ENCODE measurements at regions of chr14 and their contacts with region 1.

Region 1: DNA sequence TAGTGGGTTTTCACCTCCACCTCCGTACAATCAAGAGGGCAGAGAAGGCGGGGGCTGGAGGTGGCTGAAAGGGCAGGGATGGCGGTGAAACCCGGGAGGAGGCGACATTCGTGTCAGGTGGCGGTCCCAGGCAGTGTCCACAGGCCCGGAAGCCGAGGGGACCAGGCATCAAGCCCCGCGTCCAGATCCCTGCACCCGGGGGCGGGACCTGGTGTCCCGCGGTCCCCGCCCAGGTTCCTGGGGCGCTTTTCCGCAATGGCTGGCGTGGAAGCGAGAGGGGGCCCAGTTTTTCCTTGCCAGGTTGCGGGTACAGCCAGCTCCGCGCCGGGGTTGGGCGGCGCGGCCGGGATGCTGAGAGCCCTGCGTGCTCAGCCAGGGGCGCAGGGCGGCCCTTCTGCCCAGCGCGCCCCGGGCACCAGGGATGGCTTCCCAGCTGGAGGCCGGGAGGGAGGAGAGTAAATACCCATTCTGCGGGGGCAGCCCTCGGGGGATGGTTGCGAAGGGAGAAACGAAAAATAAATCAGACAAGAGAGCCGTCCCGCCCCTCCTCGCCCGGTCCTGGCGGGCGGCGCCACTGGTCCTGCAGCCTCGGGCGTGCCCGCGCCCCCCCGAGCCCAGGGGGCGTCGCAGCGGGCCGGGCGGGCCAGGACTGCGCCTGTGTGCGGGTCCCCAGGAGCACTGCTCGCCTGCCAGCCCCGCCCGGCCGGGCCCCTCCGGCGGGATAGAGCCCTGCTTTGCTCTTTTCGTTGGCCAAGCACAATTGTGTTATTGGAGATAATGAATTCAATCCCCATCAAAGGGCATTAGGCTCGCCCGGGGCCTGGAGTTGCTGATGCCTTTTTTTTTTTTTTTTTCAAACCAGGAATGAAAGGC is 11.5 kb downstream of the FOXA1 start:
- DNase-seq: peak; percentile 85
- ATAC-seq: peak; percentile 26
- H3K4me3 ChIP-seq: peak overlapping the region; percentile 96
- H3K27ac ChIP-seq: peak overlapping the region; percentile 99
- H3K4me1 ChIP-seq: peaks cover 86% of the 10 kb centered on the region
- H3K27me3 ChIP-seq: no peaks in the 10 kb centered on the region
- CTCF ChIP-seq: no peak; the same call in 1 of the 2 replicates

Region 2: GRCh38 chr14:37172024-37172869 is 411.3 kb before region 1 on chr14 and contains the start of gene SLC25A21:
- CTCF ChIA-PET with region 1: no interaction called
- POLR2A ChIA-PET with region 1: no interaction called
- intact Hi-C with region 1: loop called (anchors 10 kb)
- DNase-seq: peak; percentile 87
- ATAC-seq: peak; percentile 94
- H3K4me3 ChIP-seq: peak within 1 kb of the TSS; percentile 82
- H3K27ac ChIP-seq: peak within 1 kb of the TSS; percentile 87
- H3K4me1 ChIP-seq: peaks cover 15% of the 10 kb centered on the region
- H3K27me3 ChIP-seq: no peaks in the 10 kb centered on the region
- CTCF ChIP-seq: 0 out of 2 replicates have a peak, but pooled peaks have one; percentile 29
- total RNA-seq, gene SLC25A21: 0.87 and 1.0 TPM in 2 replicates

Region 3: GRCh38 chr14:37329189-37330001 is 254.2 kb before region 1 on chr14:
- CTCF ChIA-PET with region 1: no interaction called
- POLR2A ChIA-PET with region 1: interaction called, 3 read pairs
- intact Hi-C with region 1: loop called (anchors 2 kb)
- DNase-seq: peak; percentile 64
- ATAC-seq: peak; percentile 80
- H3K4me3 ChIP-seq: no peak overlapping the region
- H3K27ac ChIP-seq: peak overlapping the region; percentile 58
- H3K4me1 ChIP-seq: peaks cover 18% of the 10 kb centered on the region
- H3K27me3 ChIP-seq: no peaks in the 10 kb centered on the region
- CTCF ChIP-seq: no peak

Region 4: GRCh38 chr14:37436494-37436893 is 147.1 kb before region 1 on chr14:
- CTCF ChIA-PET with region 1: no interaction called
- POLR2A ChIA-PET with region 1: interaction called, 10 read pairs
- intact Hi-C with region 1: loop called (anchors 1 kb)
- DNase-seq: peak; percentile 97
- ATAC-seq: peak; percentile 92
- H3K4me3 ChIP-seq: no peak overlapping the region; the same call in 1 of the 2 replicates
- H3K27ac ChIP-seq: peak overlapping the region; percentile 94
- H3K4me1 ChIP-seq: peaks cover 24% of the 10 kb centered on the region
- H3K27me3 ChIP-seq: no peaks in the 10 kb centered on the region
- CTCF ChIP-seq: no peak

Region 5: GRCh38 chr14:37515771-37516170 is 67.8 kb before region 1 on chr14:
- CTCF ChIA-PET with region 1: no interaction called
- POLR2A ChIA-PET with region 1: no interaction called
- intact Hi-C with region 1: no loop called
- DNase-seq: no peak
- ATAC-seq: no peak
- H3K4me3 ChIP-seq: no peak overlapping the region
- H3K27ac ChIP-seq: no peak overlapping the region
- H3K4me1 ChIP-seq: peaks cover 10% of the 10 kb centered on the region
- H3K27me3 ChIP-seq: no peaks in the 10 kb centered on the region
- CTCF ChIP-seq: no peak

Region 6: DNA sequence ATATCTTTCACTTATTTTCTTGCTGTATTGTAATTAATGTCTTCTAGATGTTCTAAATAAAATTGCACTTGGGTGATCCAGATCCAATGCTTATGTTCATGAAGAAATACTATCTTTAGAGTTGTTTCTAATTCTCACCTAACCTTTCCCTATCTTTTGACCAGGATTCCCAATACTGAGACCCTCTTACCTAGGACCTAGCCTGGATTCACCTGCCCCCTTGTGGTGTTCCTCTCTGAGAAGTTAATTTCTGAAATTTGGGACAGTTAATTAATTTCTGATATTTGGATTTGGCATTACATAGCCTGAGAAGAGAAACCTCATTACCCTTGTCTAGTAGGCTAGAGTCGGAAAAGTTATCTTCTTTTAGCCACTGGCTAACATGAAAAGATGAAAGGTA is 18.0 kb before region 1 on chr14:
- CTCF ChIA-PET with region 1: interaction called, 4 read pairs
- POLR2A ChIA-PET with region 1: interaction called, 9 read pairs
- intact Hi-C with region 1: loop called (anchors 1 kb)
- DNase-seq: peak; percentile 59
- ATAC-seq: peak; percentile 6; the same call in 1 of the 2 replicates
- H3K4me3 ChIP-seq: peak overlapping the region; percentile 60
- H3K27ac ChIP-seq: peak overlapping the region; percentile 91
- H3K4me1 ChIP-seq: peaks cover 59% of the 10 kb centered on the region
- H3K27me3 ChIP-seq: no peaks in the 10 kb centered on the region
- CTCF ChIP-seq: peak; percentile 95